ENCODE measurements at regions of chr18 and their contacts with region 1.

Region 1: GRCh38 chr18:58768293-58768974 is 96.2 kb upstream of the ZNF532 start:
- DNase-seq: peak; percentile 77
- ATAC-seq: peak; percentile 96
- H3K4me3 Mint-ChIP-seq: no peak overlapping the region
- H3K27ac Mint-ChIP-seq: no peak overlapping the region
- H3K4me1 Mint-ChIP-seq: peaks cover 13% of the 10 kb centered on the region
- H3K27me3 Mint-ChIP-seq: peaks cover 44% of the 10 kb centered on the region

Region 2: GRCh38 chr18:58520969-58521368 is 247.5 kb before region 1 on chr18:
- CTCF ChIA-PET with region 1: interaction called, 415 read pairs
- POLR2A ChIA-PET with region 1: interaction called, 3 read pairs
- DNase-seq: no peak
- ATAC-seq: no peak
- H3K4me3 Mint-ChIP-seq: no peak overlapping the region
- H3K27ac Mint-ChIP-seq: no peak overlapping the region
- H3K4me1 Mint-ChIP-seq: peaks cover 9% of the 10 kb centered on the region
- H3K27me3 Mint-ChIP-seq: peaks cover 15% of the 10 kb centered on the region

Region 3: GRCh38 chr18:58615140-58616132 is 153.0 kb before region 1 on chr18:
- CTCF ChIA-PET with region 1: interaction called, 17 read pairs
- POLR2A ChIA-PET with region 1: no interaction called
- DNase-seq: peak; percentile 83
- ATAC-seq: peak; percentile 98
- H3K4me3 Mint-ChIP-seq: peak overlapping the region; percentile 54
- H3K27ac Mint-ChIP-seq: peak overlapping the region; percentile 94
- H3K4me1 Mint-ChIP-seq: peaks cover 41% of the 10 kb centered on the region
- H3K27me3 Mint-ChIP-seq: peaks cover 3% of the 10 kb centered on the region

Region 4: DNA sequence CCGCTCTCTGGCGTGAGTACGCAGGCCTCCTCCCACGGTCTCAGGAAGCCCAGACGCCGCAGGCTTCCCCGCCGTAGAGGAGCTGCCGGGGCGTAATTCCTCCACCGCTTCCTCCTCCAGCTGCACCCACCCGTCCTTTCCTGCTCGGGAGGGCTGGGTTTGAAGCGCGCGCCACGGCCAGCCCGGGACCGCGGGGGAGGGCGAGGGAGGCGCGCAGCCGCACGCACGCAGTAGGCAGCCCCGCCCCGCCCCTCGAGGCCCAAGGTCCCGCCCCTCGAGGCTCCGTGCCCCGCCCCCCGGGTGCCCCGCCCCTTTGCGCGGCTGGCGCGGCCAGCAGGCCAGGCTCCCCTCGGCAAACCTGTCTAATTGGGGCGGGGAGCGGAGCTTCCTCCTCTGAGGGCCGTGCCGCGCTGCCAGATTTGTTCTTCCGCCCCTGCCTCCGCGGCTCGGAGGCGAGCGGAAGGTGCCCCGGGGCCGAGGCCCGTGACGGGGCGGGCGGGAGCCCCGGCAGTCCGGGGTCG is 97.3 kb before region 1 on chr18 and contains the start of gene MALT1:
- CTCF ChIA-PET with region 1: interaction called, 39 read pairs
- POLR2A ChIA-PET with region 1: interaction called, 5 read pairs
- DNase-seq: peak; percentile 96
- ATAC-seq: peak; percentile 92
- H3K4me3 Mint-ChIP-seq: peak within 1 kb of the TSS; percentile 98
- H3K27ac Mint-ChIP-seq: peak within 1 kb of the TSS; percentile 97
- H3K4me1 Mint-ChIP-seq: peaks cover 56% of the 10 kb centered on the region
- H3K27me3 Mint-ChIP-seq: no peaks in the 10 kb centered on the region
- total RNA-seq, gene MALT1: 52.7 to 57.1 TPM

Region 5: DNA sequence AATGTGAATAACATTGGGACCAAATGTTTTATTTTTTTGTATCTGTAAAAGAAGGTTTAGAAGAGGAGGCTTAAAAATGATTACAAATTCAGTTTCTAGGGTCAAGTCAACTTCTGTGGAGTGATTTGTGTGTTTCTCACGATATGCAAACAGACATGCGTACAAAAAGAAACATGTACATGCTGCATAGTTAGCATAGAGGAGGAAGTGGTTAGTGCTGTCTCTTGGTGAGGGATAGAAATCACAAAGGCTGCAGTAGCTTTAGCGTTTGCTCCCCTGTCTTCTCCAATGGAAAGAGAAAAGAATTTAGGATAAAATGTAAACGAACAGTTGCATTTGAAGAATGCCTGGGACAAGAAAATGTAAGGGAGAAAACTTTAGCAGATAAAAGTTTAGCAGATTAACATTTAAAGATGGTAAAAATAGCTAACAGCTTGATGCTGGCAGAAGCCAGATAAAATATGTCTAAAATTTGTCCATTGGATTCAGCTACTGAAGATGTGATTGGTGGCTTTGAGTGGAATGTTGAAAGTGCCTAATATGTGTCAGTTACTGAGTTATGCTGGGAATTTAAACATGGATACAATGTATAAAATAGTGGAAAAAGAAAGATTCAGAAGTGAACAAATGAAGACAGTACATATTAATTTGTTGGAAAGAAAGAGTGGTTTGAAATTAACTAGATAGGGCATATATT is 52.2 kb before region 1 on chr18:
- CTCF ChIA-PET with region 1: interaction called, 17 read pairs
- POLR2A ChIA-PET with region 1: no interaction called
- DNase-seq: peak; percentile 38
- ATAC-seq: peak; percentile 96
- H3K4me3 Mint-ChIP-seq: peak overlapping the region; percentile 60
- H3K27ac Mint-ChIP-seq: peak overlapping the region; percentile 89
- H3K4me1 Mint-ChIP-seq: peaks cover 47% of the 10 kb centered on the region
- H3K27me3 Mint-ChIP-seq: no peaks in the 10 kb centered on the region

Region 6: DNA sequence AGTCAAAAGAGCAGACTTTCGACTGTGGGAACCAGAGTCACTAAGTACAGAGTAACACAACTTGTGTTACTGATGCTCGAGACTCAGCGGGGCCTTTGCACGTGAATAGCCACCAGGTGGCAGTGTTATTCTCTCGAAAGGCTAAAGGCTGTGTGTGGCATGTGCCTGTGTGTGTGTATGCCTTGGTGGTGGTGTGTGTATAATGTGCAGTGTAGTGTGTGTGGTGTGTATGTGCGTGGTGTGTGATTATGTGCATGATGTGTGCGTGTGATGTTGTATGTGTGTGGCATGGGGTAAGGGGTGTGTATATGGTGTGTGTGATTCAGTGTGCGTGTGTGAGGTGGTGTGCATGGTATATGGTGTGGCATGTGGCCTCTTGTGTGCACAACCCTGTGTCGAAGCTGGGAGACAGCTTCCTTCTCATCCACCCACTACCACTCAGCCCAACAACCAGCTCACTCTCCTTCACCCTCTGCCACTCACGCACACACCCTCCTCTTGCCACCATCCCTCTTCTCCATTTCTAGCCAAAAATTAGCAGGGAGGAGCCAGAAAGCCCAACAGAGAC is 13.3 kb after region 1 on chr18:
- CTCF ChIA-PET with region 1: interaction called, 11 read pairs
- POLR2A ChIA-PET with region 1: no interaction called
- DNase-seq: peak; percentile 78
- ATAC-seq: peak; percentile 89
- H3K4me3 Mint-ChIP-seq: no peak overlapping the region
- H3K27ac Mint-ChIP-seq: no peak overlapping the region
- H3K4me1 Mint-ChIP-seq: no peaks in the 10 kb centered on the region
- H3K27me3 Mint-ChIP-seq: peaks cover 8% of the 10 kb centered on the region

Region 7: DNA sequence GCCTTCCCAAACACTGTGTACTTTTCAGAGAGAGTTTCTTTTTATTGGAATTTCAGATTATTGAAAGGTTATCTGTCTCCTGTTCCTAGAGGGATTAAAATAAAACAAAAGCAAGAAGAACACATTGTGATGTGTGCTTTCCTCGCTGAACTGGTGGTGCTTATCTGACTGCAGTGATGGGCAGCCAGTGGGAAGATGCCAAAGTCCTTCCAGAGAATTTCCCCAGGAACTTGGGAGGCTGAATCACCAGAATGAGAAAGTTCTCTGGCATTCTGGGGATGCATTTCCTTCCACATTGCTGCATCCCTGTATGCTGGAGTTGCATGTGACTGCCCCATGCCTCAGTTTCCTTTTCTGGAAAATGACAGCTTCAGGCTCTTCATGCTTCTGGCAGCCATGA is 317.4 kb after region 1 on chr18:
- CTCF ChIA-PET with region 1: interaction called, 10 read pairs
- POLR2A ChIA-PET with region 1: no interaction called
- DNase-seq: no peak
- ATAC-seq: no peak
- H3K4me3 Mint-ChIP-seq: no peak overlapping the region
- H3K27ac Mint-ChIP-seq: no peak overlapping the region
- H3K4me1 Mint-ChIP-seq: peaks cover 4% of the 10 kb centered on the region
- H3K27me3 Mint-ChIP-seq: peaks cover 9% of the 10 kb centered on the region

Measured in activated CD8-positive, alpha-beta T cell treated with anti-CD3 and anti-CD28 coated beads, Interleukin-2, amount 10 ng/mL, durations not matched to agents 7 days and 5 days (primary cell).